ENCODE measurements at regions of chr15 and their contacts with region 1.

Region 1: GRCh38 chr15:71443538-71443937 is 328.3 kb downstream of the THSD4 start:
- DNase-seq: peak; percentile 55
- H3K4me3 ChIP-seq: no peak overlapping the region
- H3K27ac ChIP-seq: no peak overlapping the region
- H3K4me1 ChIP-seq: peaks cover 20% of the 10 kb centered on the region
- H3K27me3 ChIP-seq: no peaks in the 10 kb centered on the region
- CTCF ChIP-seq: peak; percentile 78 to 80
- POLR2A ChIP-seq: no peak

Region 2: DNA sequence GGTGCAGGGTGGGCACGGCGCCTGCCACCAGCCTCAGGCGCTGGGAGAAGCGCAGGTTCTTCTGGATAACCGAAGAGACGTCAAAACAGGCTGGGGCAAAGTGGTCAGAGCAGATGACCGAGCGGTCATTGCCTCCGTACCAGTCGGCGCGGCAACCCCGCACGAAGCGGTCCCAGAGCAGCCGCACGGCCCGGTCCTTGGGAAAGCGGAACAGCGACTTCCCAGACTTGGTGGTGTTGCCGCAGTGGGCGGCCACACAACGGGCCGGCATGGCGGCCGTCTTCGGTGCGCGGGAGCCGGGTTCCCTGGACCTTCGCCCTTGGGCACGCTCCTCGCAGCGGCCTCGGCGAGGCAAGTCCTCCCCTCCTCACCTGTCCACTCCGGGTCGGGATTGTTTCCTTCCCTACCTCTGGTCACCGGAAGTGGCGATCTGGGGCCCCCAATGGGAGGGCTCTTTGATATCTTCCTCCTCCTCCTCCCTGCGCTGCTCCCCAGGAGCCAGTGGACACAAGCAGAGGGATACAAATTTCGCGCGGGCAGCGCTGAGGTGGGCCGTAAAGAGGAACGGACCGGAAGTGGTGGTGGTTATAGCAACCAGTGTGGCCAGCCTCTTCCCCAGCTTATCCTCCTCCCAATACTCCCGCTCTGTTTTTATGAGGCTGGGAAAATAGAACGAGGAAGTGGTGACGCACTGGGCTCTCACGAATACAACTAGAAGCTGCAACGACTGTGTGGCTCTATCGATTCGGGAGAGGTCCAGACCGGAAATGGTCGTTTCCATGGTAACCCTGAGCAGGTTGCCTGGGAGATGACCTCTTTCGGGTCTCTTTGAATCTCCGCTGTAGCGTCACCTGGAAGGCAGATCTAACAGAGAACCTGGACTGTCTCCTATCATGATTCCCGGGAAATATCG is 551.3 kb before region 1 on chr15 and contains the starts of genes LRRC49 and THAP10:
- CTCF ChIA-PET with region 1: interaction called, 13 read pairs
- POLR2A ChIA-PET with region 1: no interaction called
- dilution Hi-C with region 1: no loop called
- intact Hi-C with region 1: loop called (anchors 1 kb)
- DNase-seq: peak; percentile 98
- H3K4me3 ChIP-seq: peak within 1 kb of the TSS; percentile 47 to 81 (median 69)
- H3K27ac ChIP-seq: peak within 1 kb of the TSS; percentile 86
- H3K4me1 ChIP-seq: peaks cover 17% of the 10 kb centered on the region
- H3K27me3 ChIP-seq: no peaks in the 10 kb centered on the region
- CTCF ChIP-seq: no peak
- POLR2A ChIP-seq: no peak
- total RNA-seq, gene LRRC49: 6.6 and 7.4 TPM in 2 replicates
- total RNA-seq, gene THAP10: 2.7 and 4.0 TPM in 2 replicates

Region 3: DNA sequence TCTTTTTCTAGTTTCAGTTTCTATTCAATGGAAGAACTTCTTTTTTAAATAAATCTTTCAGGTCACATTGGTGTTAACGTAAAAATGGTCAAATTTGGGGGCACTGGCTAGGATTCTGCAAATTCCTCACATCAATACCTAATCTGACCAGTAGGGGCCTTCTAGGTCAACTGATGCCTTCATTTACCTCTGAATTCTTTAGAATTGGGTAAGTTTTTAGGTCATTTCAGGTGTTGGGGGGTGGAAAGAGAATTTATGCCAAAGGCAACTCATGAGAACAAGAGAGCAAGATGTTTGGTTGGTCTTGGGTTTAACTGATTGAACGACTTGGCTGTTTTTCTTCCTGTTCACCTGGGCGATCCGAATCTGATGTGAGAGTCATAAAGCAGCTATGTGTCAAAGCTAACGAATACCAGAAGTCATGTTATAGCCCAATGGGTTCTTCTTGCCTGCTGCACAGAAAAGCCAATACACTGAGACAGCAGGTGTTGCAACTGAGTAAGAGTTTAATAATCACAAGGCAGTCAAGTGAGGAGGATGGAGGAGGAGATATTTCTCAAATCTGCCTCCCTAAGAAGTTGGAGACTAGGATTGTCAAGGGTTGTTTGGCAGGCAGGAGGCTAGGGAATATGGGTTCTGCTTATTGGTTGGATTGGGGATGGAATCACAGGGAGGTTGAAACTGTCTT is 535.6 kb before region 1 on chr15:
- CTCF ChIA-PET with region 1: no interaction called
- POLR2A ChIA-PET with region 1: no interaction called
- dilution Hi-C with region 1: no loop called
- intact Hi-C with region 1: no loop called
- DNase-seq: no peak
- H3K4me3 ChIP-seq: no peak overlapping the region
- H3K27ac ChIP-seq: no peak overlapping the region
- H3K4me1 ChIP-seq: no peaks in the 10 kb centered on the region
- H3K27me3 ChIP-seq: no peaks in the 10 kb centered on the region
- CTCF ChIP-seq: no peak
- POLR2A ChIP-seq: no peak

Region 4: DNA sequence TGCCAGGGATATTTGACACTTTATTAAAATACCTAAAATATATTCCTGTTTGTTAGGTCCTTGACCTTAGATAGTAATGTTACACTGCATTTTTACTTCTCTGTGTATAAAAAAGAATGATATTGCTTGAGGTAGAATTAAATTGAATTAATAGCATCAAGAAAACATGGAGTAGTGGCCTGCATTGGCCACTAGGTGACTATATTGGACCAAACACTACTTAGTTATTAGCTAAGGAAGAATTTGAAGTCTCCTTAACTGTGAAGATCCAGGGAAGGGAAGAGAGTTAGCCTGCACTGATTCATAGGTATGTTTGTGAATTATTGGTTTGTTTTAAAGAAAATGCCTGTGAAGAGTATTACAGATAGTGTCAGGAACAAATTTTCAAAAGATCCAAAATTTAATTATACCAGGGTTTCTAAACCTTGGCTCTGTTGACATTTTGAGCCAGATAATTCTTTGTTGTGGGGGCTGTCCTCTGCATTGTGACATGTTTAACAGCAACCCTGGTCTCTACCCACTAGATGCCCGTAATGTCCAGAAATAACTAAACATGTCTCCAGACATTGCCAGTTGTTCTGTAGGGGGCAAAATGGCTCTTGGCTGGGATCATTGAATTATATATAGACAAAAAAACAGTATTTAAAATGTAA is 431.9 kb before region 1 on chr15:
- CTCF ChIA-PET with region 1: interaction called, 89 read pairs
- POLR2A ChIA-PET with region 1: no interaction called
- dilution Hi-C with region 1: no loop called
- intact Hi-C with region 1: loop called (anchors 1 kb)
- DNase-seq: peak; percentile 56
- H3K4me3 ChIP-seq: no peak overlapping the region
- H3K27ac ChIP-seq: no peak overlapping the region
- H3K4me1 ChIP-seq: no peaks in the 10 kb centered on the region
- H3K27me3 ChIP-seq: no peaks in the 10 kb centered on the region
- CTCF ChIP-seq: peak; percentile 54 to 60
- POLR2A ChIP-seq: no peak

Region 5: DNA sequence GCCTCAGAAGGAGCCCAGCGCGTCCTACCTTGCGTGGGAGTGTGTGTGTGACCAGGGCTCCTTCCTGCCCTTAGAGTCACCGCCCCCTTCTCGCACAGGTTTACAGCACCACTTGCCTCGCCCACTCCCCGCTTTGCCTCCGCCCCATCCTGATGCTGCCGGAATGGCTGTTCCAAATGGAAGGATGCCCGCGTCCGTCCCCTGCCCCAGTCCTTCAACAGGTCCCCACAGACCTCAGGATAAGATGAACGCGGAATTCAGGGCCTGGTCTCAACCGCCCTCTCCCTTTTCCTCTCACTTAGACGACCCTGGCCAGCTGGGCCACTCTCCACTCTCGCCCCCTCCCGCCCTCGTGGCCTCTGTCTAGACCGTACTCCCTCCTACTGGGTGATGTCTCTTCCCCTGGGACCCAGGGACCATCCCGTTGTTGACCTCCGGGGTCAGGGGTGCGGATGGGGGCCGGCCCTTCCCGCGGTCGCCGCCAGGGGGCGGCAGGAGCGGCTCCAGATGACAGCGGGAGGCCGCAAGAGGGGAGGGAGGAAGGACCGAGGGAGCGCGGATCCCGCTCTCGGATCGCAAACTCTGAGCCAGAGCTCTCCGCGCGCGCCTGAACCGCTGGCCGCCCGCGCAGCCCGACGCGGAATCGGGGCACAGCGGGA is 328.5 kb before region 1 on chr15 and contains the start of gene THSD4:
- CTCF ChIA-PET with region 1: interaction called, 102 read pairs
- POLR2A ChIA-PET with region 1: no interaction called
- dilution Hi-C with region 1: no loop called
- intact Hi-C with region 1: loop called (anchors 1 kb)
- DNase-seq: peak; percentile 60
- H3K4me3 ChIP-seq: peak within 1 kb of the TSS; percentile 61 to 87 (median 66)
- H3K27ac ChIP-seq: peak within 1 kb of the TSS; percentile 66
- H3K4me1 ChIP-seq: peaks cover 7% of the 10 kb centered on the region
- H3K27me3 ChIP-seq: no peaks in the 10 kb centered on the region
- CTCF ChIP-seq: peak; percentile 97 to 98
- POLR2A ChIP-seq: no peak
- total RNA-seq, gene THSD4: 20.2 and 25.4 TPM in 2 replicates

Region 6: DNA sequence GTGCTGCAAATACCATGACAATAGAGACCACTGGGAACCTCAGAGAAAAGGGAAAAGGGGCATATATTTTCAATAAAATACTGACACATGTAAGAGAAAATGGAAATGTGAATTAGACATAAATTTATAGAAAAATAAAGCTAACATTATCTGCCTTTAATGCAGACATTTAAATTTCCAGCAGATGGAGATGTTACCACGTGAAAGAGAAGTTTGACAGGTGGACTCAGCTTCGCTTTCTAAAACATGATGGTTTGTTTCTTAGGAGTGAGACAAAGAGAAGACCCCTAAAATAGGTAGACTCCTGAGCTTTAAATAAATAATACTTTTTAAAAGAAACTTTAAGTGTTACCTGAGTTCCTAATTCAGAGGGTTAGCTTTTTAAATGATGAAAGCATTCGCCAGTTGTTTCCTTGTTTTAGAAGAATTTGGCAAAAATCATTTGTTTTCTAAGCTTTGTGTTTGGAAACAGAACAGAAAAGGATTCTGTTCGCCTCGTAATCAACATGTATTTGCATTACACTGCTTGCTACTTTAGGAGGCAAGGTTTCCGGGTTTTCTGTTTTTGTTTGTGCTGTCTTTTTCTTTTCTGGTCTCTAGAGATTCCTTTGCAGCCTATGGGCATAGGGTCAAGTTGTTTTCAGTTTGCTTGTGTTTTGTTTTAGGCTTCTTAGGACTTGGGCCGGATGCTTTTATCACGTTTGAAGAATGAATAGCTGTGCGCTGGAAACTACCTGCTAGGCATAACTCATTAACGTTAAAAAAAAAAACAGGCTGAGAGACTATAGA is 56.9 kb before region 1 on chr15:
- CTCF ChIA-PET with region 1: interaction called, 84 read pairs
- POLR2A ChIA-PET with region 1: no interaction called
- dilution Hi-C with region 1: no loop called
- intact Hi-C with region 1: loop called (anchors 1 kb)
- DNase-seq: peak; percentile 44
- H3K4me3 ChIP-seq: no peak overlapping the region
- H3K27ac ChIP-seq: no peak overlapping the region
- H3K4me1 ChIP-seq: peaks cover 11% of the 10 kb centered on the region
- H3K27me3 ChIP-seq: no peaks in the 10 kb centered on the region
- CTCF ChIP-seq: peak; percentile 11 to 12
- POLR2A ChIP-seq: no peak